Aorta (tissue), 5 donors: ENCODE measurements at regions of chr1 and their contacts with region 1.

Region 1: DNA sequence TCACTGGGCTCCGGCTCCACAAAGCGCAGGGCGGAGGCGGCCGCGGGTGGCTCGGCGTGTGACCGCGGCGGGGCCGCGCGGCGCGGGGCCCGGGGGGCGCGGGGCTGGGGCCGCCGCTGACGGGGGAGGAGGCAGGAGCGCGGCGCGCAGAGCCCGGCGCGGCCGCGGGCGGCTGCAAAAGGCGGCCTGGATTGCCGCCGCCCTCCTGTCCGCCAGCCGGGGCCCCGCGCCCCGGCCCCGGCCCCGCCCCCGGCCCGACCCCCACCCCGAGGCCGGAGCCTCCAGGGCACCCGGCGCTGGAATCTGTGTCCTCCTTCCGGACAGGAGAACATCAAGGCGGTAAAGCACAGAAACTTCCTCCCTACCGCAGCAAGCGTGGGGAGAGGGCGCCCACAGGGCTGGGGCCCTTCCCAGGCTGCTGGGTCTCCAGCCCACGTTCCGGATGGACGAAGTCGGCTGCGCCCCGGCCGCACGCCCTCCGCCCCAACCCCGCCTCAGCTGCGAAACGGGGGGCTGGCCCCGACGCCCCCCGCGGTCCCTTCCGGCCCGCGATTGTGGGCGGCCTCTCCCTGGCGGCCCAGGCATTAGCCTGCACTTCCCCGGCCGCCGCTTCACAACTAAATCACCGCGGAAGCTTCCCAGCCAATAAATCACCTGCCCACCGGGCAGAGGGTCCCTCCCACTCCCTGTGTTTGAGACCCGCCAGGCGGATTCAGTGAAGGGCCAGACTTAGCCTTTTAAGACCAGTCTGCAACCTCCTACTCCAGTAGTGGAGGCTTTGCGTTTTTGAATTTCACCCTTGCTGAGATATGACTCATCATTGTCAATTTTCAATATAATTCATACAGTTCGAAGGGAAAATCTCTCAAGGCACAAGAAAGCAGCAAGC is 106.0 kb downstream of the SLC45A1 start:
- DNase-seq: peak; percentile 70 to 83
- ATAC-seq: peak; percentile 62
- H3K4me3 ChIP-seq: peak overlapping the region; percentile 88 to 95
- H3K27ac ChIP-seq: peak overlapping the region; percentile 90 to 97
- H3K4me1 ChIP-seq: peaks cover 0 to 5% of the 10 kb centered on the region in 2 donors
- H3K27me3 ChIP-seq: no peaks in the 10 kb centered on the region

Region 2: DNA sequence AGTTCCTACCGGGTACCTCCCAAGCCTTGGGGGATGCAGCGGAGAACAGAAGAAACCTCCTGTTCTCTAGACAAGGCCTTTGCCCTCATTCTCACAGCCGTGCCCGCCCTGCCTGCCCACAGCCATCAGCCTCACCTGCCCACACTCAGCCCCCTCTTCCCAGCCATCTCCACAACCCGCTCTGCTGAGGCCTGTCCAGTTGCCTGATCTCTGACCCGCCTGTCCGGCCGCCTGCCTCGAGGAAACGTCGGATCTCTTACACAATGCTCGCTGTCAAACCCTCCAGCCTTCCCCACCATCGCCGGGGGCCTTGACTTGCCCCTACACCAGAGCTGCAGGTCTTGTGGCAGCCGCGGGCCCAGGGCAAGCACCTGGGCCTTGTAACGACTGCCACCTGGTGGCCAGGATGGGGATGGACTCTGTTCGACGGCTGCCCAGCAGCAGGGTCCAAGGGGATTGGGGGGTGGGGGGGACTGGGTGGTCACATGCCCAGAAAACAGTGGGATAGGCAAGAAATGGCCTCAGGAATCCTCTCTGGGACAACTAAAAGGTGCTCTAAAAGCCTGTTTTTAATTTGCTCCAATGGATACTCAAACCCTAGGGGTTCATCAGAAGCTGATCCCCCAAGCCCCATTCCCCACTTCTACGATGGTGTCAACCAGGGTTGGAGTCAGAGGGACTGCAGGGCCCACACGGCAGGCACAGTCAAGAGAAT is 75.0 kb before region 1 on chr1:
- intact Hi-C with region 1: loop called in 1 of 2 experiments (anchors 5 kb)
- DNase-seq: peak; percentile 80 to 89
- ATAC-seq: peak; percentile 79
- H3K4me3 ChIP-seq: no peak overlapping the region
- H3K27ac ChIP-seq: no peak overlapping the region
- H3K4me1 ChIP-seq: no peaks in the 10 kb centered on the region
- H3K27me3 ChIP-seq: no peaks in the 10 kb centered on the region

Region 3: GRCh38 chr1:8374812-8375211 is 49.1 kb before region 1 on chr1:
- intact Hi-C with region 1: loop called in 1 of 2 experiments (anchors 5 kb)
- DNase-seq: no peak
- ATAC-seq: no peak
- H3K4me3 ChIP-seq: no peak overlapping the region
- H3K27ac ChIP-seq: peak overlapping the region; percentile 46 to 89
- H3K4me1 ChIP-seq: peaks cover 6 to 7% of the 10 kb centered on the region in 2 donors
- H3K27me3 ChIP-seq: no peaks in the 10 kb centered on the region

Region 4: GRCh38 chr1:8702850-8703810 is 279.2 kb after region 1 on chr1:
- intact Hi-C with region 1: loop called in 1 of 2 experiments (anchors 10 kb)
- DNase-seq: peak; percentile 93 to 96
- ATAC-seq: peak; percentile 94
- H3K4me3 ChIP-seq: peak overlapping the region; percentile 93
- H3K27ac ChIP-seq: peak overlapping the region; percentile 49 to 64
- H3K4me1 ChIP-seq: no peaks in the 10 kb centered on the region
- H3K27me3 ChIP-seq: no peaks in the 10 kb centered on the region